ENCODE measurements at regions of chr6 and their contacts with region 1.

Region 1: DNA sequence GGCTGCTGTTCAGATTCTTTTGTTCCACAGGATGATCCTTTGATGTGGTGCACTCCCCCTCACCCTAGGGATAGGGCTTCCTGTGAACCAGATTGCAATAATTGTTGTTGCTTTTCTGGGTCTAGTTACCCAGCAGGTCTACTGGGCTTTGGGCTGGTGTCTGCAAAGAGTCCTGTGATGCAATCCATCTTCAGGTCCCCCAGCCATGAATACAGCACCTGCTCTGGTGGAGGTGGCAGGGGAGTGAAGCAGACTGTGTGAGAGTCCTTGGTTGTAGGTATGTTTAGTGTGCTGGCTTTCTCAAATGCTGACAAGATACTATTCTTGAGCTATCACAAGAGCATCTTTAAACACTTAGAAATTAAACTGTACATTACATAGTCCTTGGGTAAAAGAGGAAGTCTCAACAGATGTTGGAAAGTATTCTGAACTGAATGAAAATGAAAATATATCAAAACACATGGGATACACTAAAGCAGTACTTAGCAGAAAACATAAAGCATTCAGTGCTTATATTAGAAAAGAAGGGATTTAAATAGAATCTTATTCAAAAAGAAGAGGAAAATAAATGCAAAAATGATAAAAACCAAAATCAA is 49.1 kb upstream of the CCR6 start:
- DNase-seq: no peak
- ATAC-seq: no peak
- H3K4me3 ChIP-seq: no peak overlapping the region
- H3K27ac ChIP-seq: no peak overlapping the region
- H3K4me1 ChIP-seq: no peaks in the 10 kb centered on the region
- H3K27me3 ChIP-seq: no peaks in the 10 kb centered on the region; the same call in 1 of the 2 replicates
- CTCF ChIP-seq: no peak

Region 2: DNA sequence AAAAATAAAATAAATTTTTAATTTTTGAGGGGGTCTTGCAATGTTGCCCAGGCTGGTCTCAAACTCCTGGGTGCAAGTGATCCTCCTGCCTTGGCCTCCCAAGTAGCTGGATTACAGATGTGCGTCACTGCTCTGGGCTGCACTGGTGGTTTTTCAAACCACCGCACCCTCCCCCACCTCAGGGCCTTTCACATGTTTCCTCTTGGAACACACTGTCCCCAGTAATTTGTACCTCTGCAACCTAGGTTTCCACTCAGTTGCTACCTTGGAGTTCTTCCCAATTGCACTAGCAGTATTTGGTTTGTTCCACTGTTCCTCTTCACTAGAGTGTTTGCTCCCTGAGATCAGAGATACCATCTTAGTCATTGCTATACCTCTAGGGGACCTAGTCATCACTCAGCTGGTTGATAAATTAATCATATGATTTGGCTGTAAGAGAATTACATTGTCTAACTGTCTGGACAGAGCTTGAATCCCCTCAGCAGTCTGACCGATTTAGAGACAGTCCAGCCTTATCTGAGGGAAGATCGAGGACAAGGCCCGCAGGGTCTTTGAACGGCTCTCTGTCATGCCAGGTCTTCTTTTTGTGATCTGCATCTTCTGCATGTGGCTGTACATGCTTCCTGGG is 42.6 kb before region 1 on chr6:
- CTCF ChIA-PET with region 1: no interaction called
- POLR2A ChIA-PET with region 1: interaction called, 12 read pairs
- in situ Hi-C with region 1: no loop called
- intact Hi-C with region 1: no loop called
- DNase-seq: no peak
- ATAC-seq: 0 out of 2 replicates have a peak, but pooled peaks have one; percentile 40
- H3K4me3 ChIP-seq: no peak overlapping the region
- H3K27ac ChIP-seq: no peak overlapping the region
- H3K4me1 ChIP-seq: no peaks in the 10 kb centered on the region
- H3K27me3 ChIP-seq: no peaks in the 10 kb centered on the region
- CTCF ChIP-seq: no peak

Measured in Panc1 (cell line).